ENCODE measurements at regions of chr3 and their contacts with region 1.

Region 1: DNA sequence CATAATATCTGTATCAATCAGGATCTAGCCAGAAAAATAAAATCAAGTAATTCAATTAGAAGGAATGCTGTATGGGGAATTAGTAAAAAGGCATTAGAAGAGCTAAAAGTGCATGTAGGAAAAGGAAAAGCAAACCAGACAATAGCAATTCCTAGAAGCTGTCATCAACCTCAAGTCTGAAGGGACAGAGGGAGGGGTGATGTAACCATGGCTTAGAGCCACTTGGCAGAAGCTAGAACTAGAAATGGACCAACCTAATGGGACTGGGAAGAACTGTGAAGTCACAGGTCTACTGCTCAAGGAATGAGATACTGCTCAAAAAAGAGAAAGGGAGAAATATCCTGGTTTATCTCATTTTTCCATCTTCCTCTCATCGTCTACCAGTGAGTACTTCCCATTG is 590.7 kb upstream of the SGO1 start:
- DNase-seq: no peak
- H3K4me3 ChIP-seq: no peak overlapping the region
- H3K27ac ChIP-seq: no peak overlapping the region
- H3K4me1 ChIP-seq: no peaks in the 10 kb centered on the region
- H3K27me3 ChIP-seq: no peaks in the 10 kb centered on the region
- CTCF ChIP-seq: no peak

Region 2: DNA sequence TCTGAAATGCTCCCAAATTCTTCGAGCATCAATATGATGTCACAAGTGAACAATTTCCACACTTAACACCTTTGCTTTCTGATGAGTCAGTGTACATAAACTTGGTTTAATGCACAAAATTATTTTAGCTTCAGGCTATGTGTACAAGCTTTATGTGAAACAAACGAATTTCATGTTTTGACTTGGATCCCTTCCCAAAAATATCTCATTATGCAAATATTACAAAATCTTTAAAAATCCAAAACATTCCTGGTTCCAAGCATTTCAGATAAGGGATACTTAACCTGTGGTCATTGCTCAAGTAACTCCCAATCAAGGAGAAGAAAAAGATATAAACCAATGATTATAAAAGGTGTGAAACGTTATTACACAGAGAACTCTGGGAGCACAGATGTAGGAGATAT is 804.6 kb before region 1 on chr3:
- CTCF ChIA-PET with region 1: no interaction called
- POLR2A ChIA-PET with region 1: no interaction called
- intact Hi-C with region 1: no loop called
- DNase-seq: peak in 1 of 2 experiments; percentile 92
- H3K4me3 ChIP-seq: no peak overlapping the region
- H3K27ac ChIP-seq: peak overlapping the region; percentile 55
- H3K4me1 ChIP-seq: peaks cover 33% of the 10 kb centered on the region
- H3K27me3 ChIP-seq: no peaks in the 10 kb centered on the region
- CTCF ChIP-seq: no peak

Region 3: GRCh38 chr3:20760981-20761380 is 15.7 kb before region 1 on chr3:
- CTCF ChIA-PET with region 1: interaction called, 10 read pairs
- POLR2A ChIA-PET with region 1: no interaction called
- intact Hi-C with region 1: no loop called
- DNase-seq: no peak
- H3K4me3 ChIP-seq: no peak overlapping the region
- H3K27ac ChIP-seq: no peak overlapping the region
- H3K4me1 ChIP-seq: no peaks in the 10 kb centered on the region
- H3K27me3 ChIP-seq: no peaks in the 10 kb centered on the region
- CTCF ChIP-seq: no peak

Region 4: GRCh38 chr3:20916951-20917606 is 140.4 kb after region 1 on chr3:
- CTCF ChIA-PET with region 1: no interaction called
- POLR2A ChIA-PET with region 1: no interaction called
- intact Hi-C with region 1: loop called (anchors 10 kb)
- DNase-seq: no peak
- H3K4me3 ChIP-seq: no peak overlapping the region
- H3K27ac ChIP-seq: no peak overlapping the region
- H3K4me1 ChIP-seq: no peaks in the 10 kb centered on the region
- H3K27me3 ChIP-seq: no peaks in the 10 kb centered on the region
- CTCF ChIP-seq: no peak